Posterior vena cava (tissue), 2 donors: ENCODE measurements at regions of chr2 and their contacts with region 1.

Region 1: GRCh38 chr2:50975539-50975938 is 56.4 kb downstream of the NRXN1 start:
- DNase-seq: no peak

Region 2: DNA sequence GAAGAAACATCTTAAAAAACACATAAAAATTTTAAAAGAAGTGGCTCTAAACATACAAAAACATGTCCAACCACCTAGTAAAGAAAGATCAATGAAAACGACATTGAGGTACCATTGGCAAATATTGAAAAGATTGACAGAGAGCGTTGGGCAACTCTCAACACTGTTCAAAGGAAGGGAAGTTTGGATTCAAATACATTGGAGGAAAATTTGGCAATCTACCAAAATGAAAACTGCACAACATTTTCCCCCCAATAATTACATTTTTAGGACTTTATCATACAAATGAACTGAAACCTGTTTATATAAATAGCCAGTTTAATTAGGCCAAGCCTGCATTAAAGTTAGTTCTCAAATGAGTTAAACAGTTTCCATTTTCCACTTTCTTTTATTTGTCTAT is 702.5 kb before region 1 on chr2:
- intact Hi-C with region 1: loop called in 1 of 2 experiments (anchors 10 kb)
- DNase-seq: no peak

Region 3: GRCh38 chr2:50513724-50514123 is 461.8 kb before region 1 on chr2:
- intact Hi-C with region 1: no loop called
- DNase-seq: no peak

Region 4: DNA sequence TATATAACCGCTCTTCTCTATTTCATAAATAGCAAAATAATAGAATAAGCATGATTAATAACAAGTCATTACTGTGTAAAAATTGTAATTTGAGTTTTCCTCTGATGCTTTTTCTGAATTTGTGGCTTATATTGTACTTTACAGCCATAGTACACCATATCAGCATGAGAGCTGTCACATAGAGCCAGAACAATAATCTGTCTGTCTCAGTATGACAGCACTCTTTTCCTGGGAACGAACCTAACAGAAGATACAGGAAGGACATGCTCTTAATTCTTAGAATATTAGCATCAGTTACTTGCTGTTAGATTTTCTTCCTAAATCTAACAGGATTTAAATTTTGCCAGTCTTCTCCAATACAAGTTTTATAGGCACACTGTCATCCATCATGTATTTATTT is 77.7 kb after region 1 on chr2:
- intact Hi-C with region 1: loop called in 1 of 2 experiments (anchors 2 kb)
- DNase-seq: no peak